ENCODE measurements at regions of chr2 and their contacts with region 1.

Region 1: DNA sequence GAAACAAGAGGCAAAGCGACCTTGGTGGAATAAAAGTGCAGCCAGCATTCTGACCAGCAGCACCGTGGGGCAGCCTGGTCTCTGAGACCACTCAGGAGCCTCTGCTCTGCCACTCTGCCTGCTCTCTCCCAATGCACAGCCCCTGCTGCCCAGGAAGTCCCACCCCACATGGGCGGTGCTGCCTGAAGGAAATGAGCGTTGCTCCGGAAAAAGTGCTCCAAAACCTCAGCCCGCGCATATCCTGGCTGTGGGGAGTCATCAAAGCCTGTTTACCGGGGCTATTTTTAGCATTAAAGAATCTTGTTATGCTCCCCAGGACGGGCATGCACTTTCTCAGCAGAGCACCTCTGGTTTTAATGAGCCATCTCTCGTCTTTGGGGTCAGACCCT is 54.5 kb downstream of the EPAS1 start:
- DNase-seq: no peak
- ATAC-seq: no peak
- H3K4me3 ChIP-seq: no peak overlapping the region
- H3K27ac ChIP-seq: no peak overlapping the region
- H3K4me1 ChIP-seq: no peaks in the 10 kb centered on the region
- H3K27me3 ChIP-seq: no peaks in the 10 kb centered on the region
- CTCF ChIP-seq: no peak
- POLR2A ChIP-seq: no peak
- RAD21 ChIP-seq: no peak

Region 2: GRCh38 chr2:45631955-45632354 is 719.8 kb before region 1 on chr2:
- CTCF ChIA-PET with region 1: no interaction called
- POLR2A ChIA-PET with region 1: no interaction called
- dilution Hi-C with region 1: no loop called
- in situ Hi-C with region 1: no loop called
- intact Hi-C with region 1: loop called (anchors 5 kb)
- DNase-seq: no peak
- ATAC-seq: no peak
- H3K4me3 ChIP-seq: no peak overlapping the region
- H3K27ac ChIP-seq: no peak overlapping the region
- H3K4me1 ChIP-seq: peaks cover 2% of the 10 kb centered on the region; the same call in 1 of the 2 replicates
- H3K27me3 ChIP-seq: peaks cover 53% of the 10 kb centered on the region
- CTCF ChIP-seq: no peak
- POLR2A ChIP-seq: no peak
- RAD21 ChIP-seq: no peak